ENCODE measurements at regions of chr13 and their contacts with region 1.

Region 1: DNA sequence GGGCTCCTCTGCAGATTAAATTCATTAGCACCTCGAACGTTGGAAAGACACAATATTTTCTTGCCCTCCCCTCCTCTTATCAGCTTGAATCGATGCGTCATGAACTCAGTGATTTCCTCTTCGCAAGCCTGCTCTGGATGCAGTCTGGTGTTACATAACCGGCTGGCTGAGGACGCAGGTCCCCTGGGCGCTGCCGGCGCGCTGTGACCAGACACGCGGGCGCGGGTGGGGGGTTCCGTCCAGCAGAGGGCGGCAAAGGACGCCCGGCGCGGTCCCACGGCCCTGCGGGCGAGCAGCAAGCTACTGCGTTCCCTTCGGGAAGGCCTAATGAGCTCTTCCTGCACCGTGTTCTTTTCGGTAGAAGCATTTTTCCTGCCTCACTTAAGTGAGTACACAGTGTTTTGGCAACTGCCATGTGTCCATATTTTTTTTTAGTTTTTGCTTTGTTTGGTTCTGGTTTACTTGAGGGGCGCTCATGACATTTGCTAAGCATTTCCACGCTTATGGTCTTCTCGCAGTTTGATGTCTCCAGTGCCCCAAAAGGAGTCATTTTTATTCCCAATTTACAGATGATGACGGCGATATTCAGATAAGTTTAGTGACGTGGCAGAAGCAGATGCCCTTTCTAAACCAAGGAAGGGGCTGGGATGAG is 112.2 kb upstream of the MBNL2 start:
- DNase-seq: peak; percentile 89 to 98
- H3K4me3 ChIP-seq: no peak overlapping the region
- CTCF ChIP-seq: peak in 2 of 3 donors; percentile 46 to 77
- POLR2A ChIP-seq: no peak

Region 2: GRCh38 chr13:97344265-97345175 is 234.6 kb after region 1 on chr13:
- intact Hi-C with region 1: loop called (anchors 5 kb)
- DNase-seq: peak in 1 of 2 donors; percentile 66
- H3K4me3 ChIP-seq: no peak overlapping the region
- CTCF ChIP-seq: no peak
- POLR2A ChIP-seq: no peak

Measured in lower leg skin (tissue), 4 donors.